ENCODE measurements at regions of chr9 and their contacts with region 1.

Region 1: GRCh38 chr9:5510360-5510931 is at the start of gene PDCD1LG2:
- DNase-seq: peak; percentile 39
- CTCF ChIP-seq: no peak

Region 2: DNA sequence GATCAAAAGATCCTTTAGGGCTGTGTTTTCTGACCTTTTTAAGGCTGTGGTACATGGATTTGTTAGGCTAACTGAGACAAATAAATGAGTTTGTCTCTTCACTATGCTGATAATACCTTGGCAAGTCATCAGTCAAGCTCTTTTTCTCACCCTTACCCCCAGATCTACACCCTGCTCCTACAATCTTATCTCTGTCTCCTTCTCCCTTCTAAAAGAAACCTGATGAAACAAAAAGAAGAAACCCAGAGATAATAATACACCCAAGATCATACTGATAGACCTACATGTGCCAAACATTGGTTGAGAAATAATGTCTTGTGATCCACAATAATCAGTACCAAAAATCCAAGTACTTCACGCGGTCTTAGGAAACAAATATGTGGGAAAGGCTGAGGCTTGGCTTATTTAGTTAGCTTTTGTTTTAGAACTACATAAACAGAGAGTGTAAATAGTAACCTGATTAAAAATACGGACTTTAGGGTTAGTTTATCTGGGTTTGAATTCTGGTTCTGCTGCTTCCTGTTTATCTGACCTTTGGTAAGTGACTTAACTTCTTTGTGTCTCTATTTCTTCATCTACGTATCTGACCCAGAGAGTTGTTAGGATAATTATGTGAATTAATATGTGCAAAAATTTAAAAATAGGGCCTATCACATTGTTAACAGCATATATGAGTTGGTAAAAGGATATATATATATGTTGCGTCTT is 24.9 kb before region 1 on chr9:
- CTCF ChIA-PET with region 1: no interaction called
- POLR2A ChIA-PET with region 1: no interaction called
- DNase-seq: no peak
- CTCF ChIP-seq: no peak

Region 3: GRCh38 chr9:5524090-5524489 is 13.6 kb after region 1 on chr9:
- CTCF ChIA-PET with region 1: interaction called, 16 read pairs
- POLR2A ChIA-PET with region 1: no interaction called
- DNase-seq: no peak
- CTCF ChIP-seq: no peak

Region 4: GRCh38 chr9:5644501-5644900 is 134.1 kb after region 1 on chr9:
- CTCF ChIA-PET with region 1: no interaction called
- POLR2A ChIA-PET with region 1: no interaction called
- DNase-seq: no peak
- CTCF ChIP-seq: no peak